ENCODE measurements at regions of chr18 and their contacts with region 1.

Region 1: GRCh38 chr18:29104671-29105070 is 927.7 kb upstream of the CDH2 start:
- DNase-seq: no peak
- ATAC-seq: no peak

Region 2: GRCh38 chr18:28890791-28891190 is 213.9 kb before region 1 on chr18:
- intact Hi-C with region 1: no loop called
- DNase-seq: no peak
- ATAC-seq: no peak

Region 3: GRCh38 chr18:29154758-29155725 is 50.4 kb after region 1 on chr18:
- intact Hi-C with region 1: loop called (anchors 10 kb)
- DNase-seq: no peak
- ATAC-seq: no peak

Region 4: DNA sequence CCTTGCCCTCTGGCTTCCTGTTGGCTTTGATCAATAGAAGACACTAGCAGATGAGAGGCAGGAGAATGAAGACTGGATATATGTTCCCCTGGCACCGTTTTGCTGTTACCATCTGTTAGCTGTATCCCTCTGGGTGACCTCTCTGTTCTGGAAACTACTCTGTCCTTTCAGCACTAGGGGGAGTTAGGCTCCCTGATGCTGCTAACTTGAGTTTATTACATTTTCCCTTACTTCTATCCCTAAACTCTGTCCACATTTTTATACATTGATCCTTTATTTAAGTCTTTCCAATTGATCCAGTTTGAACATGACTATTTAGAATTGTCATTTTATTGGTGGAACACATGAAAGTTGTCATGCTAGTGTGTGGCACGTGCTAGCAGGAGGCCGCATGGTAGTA is 86.6 kb after region 1 on chr18:
- intact Hi-C with region 1: no loop called
- DNase-seq: no peak
- ATAC-seq: no peak

Measured in left ventricle myocardium superior (tissue), 1 donor.